Heart left ventricle (tissue), 16 donors: ENCODE measurements at regions of chr14 and their contacts with region 1.

Region 1: DNA sequence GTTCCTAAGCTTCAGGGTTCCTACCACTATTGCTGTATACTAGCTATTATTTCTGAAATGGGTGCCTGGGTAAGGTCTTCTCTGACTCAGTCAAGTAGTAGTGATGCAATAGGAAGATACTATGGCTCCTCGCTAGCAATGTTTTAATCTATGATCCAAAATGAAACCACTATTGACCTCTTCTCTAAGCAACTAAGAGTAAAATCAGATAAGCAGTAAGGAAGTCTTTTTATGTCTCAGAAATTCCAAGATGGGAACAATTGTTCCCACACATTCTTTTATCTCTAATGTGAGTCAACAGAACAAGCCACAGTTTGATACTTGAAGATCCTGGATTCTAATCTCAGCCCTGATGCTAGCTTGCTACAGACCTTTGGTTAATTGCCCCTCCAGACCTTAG is 45.1 kb downstream of the AREL1 start:
- DNase-seq: no peak
- ATAC-seq: no peak
- H3K4me3 ChIP-seq: no peak overlapping the region
- H3K27ac ChIP-seq: no peak overlapping the region
- H3K4me1 ChIP-seq: peaks cover 0 to 23% (median 9%) of the 10 kb centered on the region in 12 donors
- H3K27me3 ChIP-seq: no peaks in the 10 kb centered on the region
- CTCF ChIP-seq: no peak
- POLR2A ChIP-seq: no peak

Region 2: GRCh38 chr14:74816124-74816523 is 148.4 kb after region 1 on chr14:
- intact Hi-C with region 1: loop called in 1 of 10 experiments (anchors 10 kb)
- DNase-seq: no peak
- ATAC-seq: no peak
- H3K4me3 ChIP-seq: no peak overlapping the region
- H3K27ac ChIP-seq: no peak overlapping the region
- H3K4me1 ChIP-seq: no peaks in the 10 kb centered on the region
- H3K27me3 ChIP-seq: no peaks in the 10 kb centered on the region
- CTCF ChIP-seq: no peak
- POLR2A ChIP-seq: no peak